GM13977 (cell line): ENCODE measurements at regions of chr16 and their contacts with region 1.

Region 1: GRCh38 chr16:21656795-21657768 is 4.7 kb upstream of the IGSF6 start:
- DNase-seq: peak; percentile 73
- CTCF ChIP-seq: peak; percentile 71

Region 2: GRCh38 chr16:21244518-21245215 is 412.4 kb before region 1 on chr16:
- in situ Hi-C with region 1: no loop called
- DNase-seq: no peak
- CTCF ChIP-seq: no peak

Region 3: DNA sequence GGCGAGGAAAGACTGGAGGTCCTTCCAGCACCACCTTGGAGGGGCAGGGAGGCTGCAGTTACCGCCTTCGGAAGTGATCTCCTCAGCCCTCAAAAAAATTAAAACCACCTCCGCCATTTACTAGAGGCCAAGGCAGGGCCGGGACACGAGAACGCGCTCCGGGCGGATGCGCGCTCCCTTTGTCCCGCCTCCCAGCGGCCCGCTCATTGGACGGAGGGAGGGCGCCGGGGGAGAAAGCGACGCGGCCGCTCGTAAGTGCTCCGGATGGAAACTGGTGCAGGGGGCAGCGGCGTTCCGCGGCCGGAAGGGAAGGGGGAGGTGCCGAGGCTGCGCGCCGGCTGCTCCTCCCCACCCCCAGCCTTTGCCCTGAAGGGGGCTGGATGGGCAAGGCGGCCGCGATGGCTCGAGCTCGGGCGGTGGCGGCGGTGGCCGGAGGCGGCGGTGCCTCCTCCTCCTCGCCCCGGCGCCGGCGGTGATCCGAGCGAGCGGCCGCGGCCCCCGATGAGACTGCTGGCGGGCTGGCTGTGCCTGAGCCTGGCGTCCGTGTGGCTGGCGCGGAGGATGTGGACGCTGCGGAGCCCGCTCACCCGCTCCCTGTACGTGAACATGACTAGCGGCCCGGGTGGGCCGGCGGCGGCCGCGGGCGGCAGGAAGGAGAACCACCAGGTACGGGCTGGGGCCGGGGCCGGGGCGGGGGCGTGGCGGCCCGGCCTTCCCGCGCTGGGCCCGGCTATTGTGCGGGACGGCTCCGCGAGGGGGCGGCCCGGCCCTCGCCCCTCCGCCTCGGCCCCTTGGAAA is 57.6 kb before region 1 on chr16 and contains the start of gene METTL9:
- in situ Hi-C with region 1: loop called (anchors 10 kb)
- DNase-seq: peak; percentile 94
- CTCF ChIP-seq: no peak

Region 4: DNA sequence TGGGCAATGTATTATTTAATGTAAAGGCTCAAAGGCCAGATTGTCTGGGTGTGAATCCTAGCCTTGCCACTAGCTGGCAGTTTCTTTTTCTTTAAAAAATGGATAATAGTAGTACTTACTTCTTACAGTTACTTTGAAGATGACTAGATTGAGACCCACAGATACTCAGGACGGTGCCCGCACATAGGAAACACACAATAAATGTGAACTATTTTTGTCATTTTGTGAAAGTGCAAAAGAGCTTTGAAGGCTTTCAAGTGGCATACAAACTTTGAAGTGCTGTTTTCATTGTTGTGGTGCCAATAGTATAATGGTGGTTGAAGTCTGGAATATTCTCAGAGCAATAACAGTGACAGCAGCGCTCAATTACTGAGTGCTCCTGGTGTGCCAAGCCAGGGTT is 70.3 kb after region 1 on chr16:
- in situ Hi-C with region 1: no loop called
- DNase-seq: no peak
- CTCF ChIP-seq: no peak

Region 5: DNA sequence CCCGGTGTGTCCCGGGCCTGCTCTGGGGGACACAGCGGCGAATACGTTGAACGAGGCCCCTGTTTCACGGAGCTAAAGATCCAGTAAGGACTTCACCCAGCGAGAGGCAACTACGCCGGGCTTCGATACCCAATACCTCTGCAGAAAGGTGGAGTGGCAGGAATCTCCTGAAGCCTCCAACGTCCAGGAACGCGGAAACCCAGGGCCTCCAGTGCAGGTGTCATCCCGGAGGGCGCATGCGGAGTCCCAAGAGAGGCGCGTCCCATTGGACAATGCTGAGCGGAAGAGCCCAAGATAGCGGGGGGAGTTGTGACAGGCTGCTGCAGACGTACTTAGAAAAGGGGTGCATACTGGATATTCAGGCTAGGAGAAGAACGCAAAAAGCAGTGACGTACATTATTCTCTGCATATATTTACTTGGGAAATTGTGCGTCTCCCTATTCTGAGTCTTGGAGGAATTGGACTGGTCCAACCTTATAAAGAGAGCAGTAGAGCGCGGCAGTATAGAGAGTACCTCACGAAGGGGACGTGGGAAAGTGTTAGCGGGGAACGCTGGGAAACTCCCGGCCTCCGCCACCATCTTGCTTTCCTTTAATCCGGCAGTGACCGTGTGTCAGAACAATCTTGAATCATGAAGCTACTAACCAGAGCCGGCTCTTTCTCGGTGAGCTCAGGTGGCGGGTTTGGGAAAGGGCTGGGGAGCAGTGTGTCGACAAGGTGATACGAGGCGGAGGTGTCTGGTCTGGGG is 295.9 kb after region 1 on chr16 and contains the start of gene UQCRC2:
- in situ Hi-C with region 1: no loop called
- DNase-seq: peak; percentile 81
- CTCF ChIP-seq: no peak